Astrocyte of the cerebellum (primary cell): ENCODE measurements at regions of chr1 and their contacts with region 1.

Region 1: DNA sequence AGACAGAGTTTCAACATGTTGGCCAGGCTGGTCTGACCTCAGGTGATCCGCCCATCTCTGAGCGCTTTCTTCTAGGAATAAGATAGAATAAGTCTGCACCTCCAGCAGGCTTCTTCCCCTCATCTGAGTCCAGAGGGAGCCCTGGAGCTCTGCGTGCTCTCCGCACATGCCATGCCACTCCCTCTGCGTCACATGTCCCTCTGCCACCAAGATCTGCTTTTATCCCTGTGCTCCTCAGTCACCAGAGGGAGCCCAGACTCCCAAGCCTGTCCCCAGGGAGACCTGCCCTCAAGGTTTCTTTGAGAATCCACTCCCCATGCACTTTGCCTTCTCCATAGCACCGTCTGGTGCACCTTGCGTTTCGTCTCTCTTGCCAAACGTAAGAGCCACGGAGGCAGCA is 213.0 kb downstream of the CAMTA1 start:
- DNase-seq: no peak
- H3K4me3 ChIP-seq: no peak overlapping the region
- CTCF ChIP-seq: no peak

Region 2: GRCh38 chr1:6918186-6918924 is 79.9 kb before region 1 on chr1:
- in situ Hi-C with region 1: loop called (anchors 5 kb)
- DNase-seq: no peak
- H3K4me3 ChIP-seq: no peak overlapping the region
- CTCF ChIP-seq: no peak

Region 3: GRCh38 chr1:7036386-7036785 is 38.1 kb after region 1 on chr1:
- in situ Hi-C with region 1: no loop called
- DNase-seq: no peak
- H3K4me3 ChIP-seq: no peak overlapping the region
- CTCF ChIP-seq: no peak